ENCODE measurements at regions of chr9 and their contacts with region 1.

Region 1: DNA sequence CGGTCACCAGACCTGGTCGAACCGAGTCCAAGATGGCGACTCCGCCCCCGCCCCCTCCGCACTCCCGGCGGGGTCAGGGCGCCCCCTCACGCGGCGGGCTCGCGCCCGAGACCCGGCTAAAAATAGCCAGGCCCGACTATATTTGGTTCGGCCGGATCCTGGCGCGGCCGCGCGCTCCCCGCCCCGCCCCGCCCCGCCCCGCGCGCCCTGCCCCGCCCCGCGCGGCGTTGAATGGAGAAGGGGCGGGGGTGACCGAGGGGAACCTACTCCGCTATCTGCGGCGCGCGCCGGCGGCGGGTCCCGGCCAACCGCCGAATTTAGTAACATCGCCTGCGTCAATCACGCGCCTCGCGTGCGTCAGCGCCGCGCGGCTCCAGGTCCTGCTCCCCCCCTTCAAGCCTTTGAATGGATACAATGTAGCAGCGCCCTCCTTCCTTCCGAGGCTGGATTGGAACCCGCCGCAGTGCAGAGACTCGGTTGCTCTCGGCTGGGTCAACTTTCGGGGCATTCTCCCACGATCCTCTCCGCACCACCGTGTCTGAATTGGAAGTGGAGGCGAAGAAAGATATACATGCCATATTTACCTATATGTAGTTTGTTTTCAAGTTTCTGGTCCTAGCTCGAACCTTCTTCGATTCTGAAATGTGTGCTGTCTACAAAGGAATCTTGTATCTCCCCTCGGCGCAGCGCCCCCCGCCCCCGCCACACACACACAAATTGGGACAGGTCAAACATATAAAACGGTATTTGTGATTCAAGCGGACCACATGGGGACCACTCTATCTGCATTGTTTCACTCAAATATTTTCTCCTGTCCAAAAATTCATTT is 1.6 kb upstream of the NR4A3 start:
- DNase-seq: peak; percentile 96 to 98
- ATAC-seq: peak; percentile 70 to 74 (median 72)
- H3K4me3 ChIP-seq: peak overlapping the region; percentile 79
- H3K27ac ChIP-seq: peak overlapping the region; percentile 99
- H3K4me1 ChIP-seq: peaks cover 22% of the 10 kb centered on the region
- H3K27me3 ChIP-seq: no peaks in the 10 kb centered on the region
- CTCF ChIP-seq: no peak

Region 2: GRCh38 chr9:99184475-99185347 is 635.4 kb before region 1 on chr9:
- intact Hi-C with region 1: loop called in 1 of 2 experiments (anchors 10 kb)
- DNase-seq: peak; percentile 86 to 92
- ATAC-seq: peak; percentile 88 to 97 (median 94)
- H3K4me3 ChIP-seq: peak overlapping the region; percentile 54
- H3K27ac ChIP-seq: no peak overlapping the region
- H3K4me1 ChIP-seq: no peaks in the 10 kb centered on the region
- H3K27me3 ChIP-seq: no peaks in the 10 kb centered on the region
- CTCF ChIP-seq: peak; percentile 96

Region 3: GRCh38 chr9:99259231-99259918 is 560.7 kb before region 1 on chr9:
- intact Hi-C with region 1: loop called (anchors 1 to 2 kb)
- DNase-seq: peak; percentile 92 to 98
- ATAC-seq: peak; percentile 80 to 86 (median 84)
- H3K4me3 ChIP-seq: peak overlapping the region; percentile 58
- H3K27ac ChIP-seq: peak overlapping the region; percentile 95
- H3K4me1 ChIP-seq: peaks cover 23% of the 10 kb centered on the region
- H3K27me3 ChIP-seq: no peaks in the 10 kb centered on the region
- CTCF ChIP-seq: no peak

Region 4: DNA sequence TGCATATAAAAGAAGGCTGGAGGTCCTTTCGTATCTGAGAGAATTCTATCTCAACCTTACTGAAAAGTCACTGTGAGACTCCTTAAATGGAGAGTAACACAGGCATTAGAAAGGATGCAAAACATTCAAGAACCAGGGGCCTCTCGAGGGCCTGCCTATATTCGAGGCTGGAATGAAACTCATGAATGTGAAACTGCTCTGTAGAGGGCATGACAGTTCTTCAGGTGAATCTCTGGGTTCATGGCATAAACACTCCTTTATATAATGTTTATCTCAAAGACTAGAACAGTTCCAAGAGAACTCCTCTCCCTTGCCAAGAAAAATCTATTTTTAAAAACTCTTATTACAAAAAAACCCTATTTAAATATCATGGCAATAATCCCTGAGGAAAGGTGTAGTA is 484.1 kb before region 1 on chr9:
- intact Hi-C with region 1: no loop called
- DNase-seq: no peak
- ATAC-seq: peak in 3 of 4 donors; percentile 49 to 73 (median 70)
- H3K4me3 ChIP-seq: no peak overlapping the region
- H3K27ac ChIP-seq: no peak overlapping the region
- H3K4me1 ChIP-seq: peaks cover 8% of the 10 kb centered on the region
- H3K27me3 ChIP-seq: no peaks in the 10 kb centered on the region
- CTCF ChIP-seq: peak; percentile 16

Region 5: GRCh38 chr9:99353408-99353807 is 466.7 kb before region 1 on chr9:
- intact Hi-C with region 1: loop called (anchors 1 to 5 kb)
- DNase-seq: peak in 1 of 2 donors; percentile 52
- ATAC-seq: no peak
- H3K4me3 ChIP-seq: no peak overlapping the region
- H3K27ac ChIP-seq: no peak overlapping the region
- H3K4me1 ChIP-seq: peaks cover 19% of the 10 kb centered on the region
- H3K27me3 ChIP-seq: no peaks in the 10 kb centered on the region
- CTCF ChIP-seq: no peak

Region 6: GRCh38 chr9:99451112-99451606 is 368.9 kb before region 1 on chr9:
- intact Hi-C with region 1: loop called in 1 of 2 experiments (anchors 5 kb)
- DNase-seq: no peak
- ATAC-seq: peak; percentile 88 to 91 (median 90)
- H3K4me3 ChIP-seq: no peak overlapping the region
- H3K27ac ChIP-seq: peak overlapping the region; percentile 51
- H3K4me1 ChIP-seq: peaks cover 17% of the 10 kb centered on the region
- H3K27me3 ChIP-seq: no peaks in the 10 kb centered on the region
- CTCF ChIP-seq: no peak

Region 7: DNA sequence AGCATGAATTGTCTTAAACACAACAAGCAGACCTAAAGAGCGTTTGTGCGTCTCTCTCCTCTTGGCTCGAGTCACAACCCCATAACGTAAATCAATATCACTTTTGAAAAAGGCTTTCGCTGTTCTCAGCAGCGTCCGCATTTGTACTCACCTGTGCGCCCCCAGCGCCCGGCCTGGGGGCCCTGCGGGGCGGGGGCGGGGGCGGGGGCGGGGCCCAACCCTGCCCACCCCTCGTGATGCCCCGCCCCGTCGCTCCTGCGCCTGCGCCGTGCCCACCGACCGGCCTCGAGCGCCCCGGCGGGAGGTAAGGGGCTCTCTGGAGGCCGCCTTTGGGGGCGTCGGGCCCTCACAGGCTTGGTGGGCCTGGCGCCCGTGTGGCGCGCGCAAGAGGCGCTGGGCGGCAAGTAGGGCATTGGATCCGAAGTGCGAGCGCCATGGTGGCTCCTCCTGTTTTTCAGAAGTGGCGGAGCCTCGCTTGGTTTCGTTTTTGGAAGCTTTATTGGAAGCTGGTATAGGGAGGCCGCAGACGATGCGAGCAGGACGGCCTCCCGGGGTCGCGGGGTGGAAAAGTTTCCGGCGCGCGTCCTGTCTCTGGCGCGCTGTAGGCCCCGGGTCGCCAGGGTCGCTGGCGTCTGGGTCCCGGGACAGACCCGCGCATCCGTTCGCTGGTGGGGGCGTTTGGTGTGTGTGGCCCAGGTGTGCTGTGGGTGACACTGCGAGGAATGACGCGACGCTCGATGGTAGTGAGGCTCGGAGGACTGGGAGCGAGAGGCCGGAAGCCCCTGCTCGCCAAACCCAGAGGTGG is 86.5 kb after region 1 on chr9 and contains the start of gene STX17:
- intact Hi-C with region 1: loop called (anchors 2 to 10 kb)
- DNase-seq: peak; percentile 81 to 89
- ATAC-seq: peak; percentile 94 to 97 (median 96)
- H3K4me3 ChIP-seq: peak within 1 kb of the TSS; percentile 99
- H3K27ac ChIP-seq: peak within 1 kb of the TSS; percentile 99
- H3K4me1 ChIP-seq: peaks cover 22% of the 10 kb centered on the region
- H3K27me3 ChIP-seq: no peaks in the 10 kb centered on the region
- CTCF ChIP-seq: peak; percentile 11
- total RNA-seq, gene STX17: 19.6 to 31.1 (median 28.5) TPM

Region 8: DNA sequence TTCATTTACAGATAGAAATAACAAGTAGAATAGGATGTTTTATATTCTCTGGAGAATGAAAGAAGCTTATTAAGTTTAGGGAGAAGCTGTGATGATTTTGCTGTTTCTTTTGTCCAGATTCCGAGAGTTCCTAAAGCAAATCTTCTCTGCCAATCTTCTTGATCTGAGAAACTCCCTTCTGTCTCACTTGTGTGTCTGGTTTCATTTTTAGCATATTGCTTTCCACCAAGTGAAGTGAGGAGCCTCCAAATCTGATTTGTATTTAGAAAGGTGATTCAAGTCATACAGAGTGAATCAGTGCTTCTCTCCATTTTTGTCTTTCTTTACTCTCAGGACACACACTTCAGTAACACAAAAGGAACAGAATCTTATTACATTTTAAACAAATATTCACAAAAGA is 134.7 kb after region 1 on chr9:
- intact Hi-C with region 1: no loop called
- DNase-seq: no peak
- ATAC-seq: peak in 1 of 4 donors; percentile 52
- H3K4me3 ChIP-seq: no peak overlapping the region
- H3K27ac ChIP-seq: no peak overlapping the region
- H3K4me1 ChIP-seq: peaks cover 7% of the 10 kb centered on the region
- H3K27me3 ChIP-seq: no peaks in the 10 kb centered on the region
- CTCF ChIP-seq: no peak